Panc1 (cell line): ENCODE measurements at regions of chr7 and their contacts with region 1.

Region 1: DNA sequence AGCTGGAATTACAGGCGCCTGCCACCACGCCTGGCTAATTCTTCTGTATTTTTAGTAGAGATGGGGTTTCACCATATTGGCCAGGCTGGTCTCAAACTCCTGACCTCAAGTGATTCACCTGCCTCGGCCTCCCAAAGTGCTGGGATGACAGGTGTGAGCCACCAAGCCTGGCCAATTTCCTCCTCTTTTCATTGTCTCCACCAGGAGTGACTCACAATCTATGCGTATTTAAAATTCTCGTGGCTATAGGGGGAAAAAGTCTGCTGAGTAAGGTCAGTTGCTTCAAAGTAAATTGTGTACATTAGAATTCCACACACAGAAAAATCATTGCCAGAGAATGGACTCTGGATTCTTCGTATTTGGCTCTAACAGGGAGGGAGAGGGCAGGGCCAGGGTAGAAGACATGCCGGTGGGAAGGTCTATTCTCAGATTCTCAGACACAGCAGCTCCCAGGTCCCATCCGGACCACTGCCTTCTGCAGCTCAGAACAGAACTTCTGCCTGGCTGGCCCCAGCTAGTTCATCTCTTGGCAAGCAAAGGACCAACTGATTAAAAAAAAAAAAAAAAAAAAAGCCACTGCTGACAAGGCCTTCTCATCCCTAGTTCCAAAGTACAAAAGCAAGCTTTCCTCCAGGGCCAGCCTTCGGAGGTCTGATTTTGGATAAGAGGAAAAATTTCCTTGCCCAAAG is 22.2 kb downstream of the PSPH start:
- DNase-seq: no peak
- ATAC-seq: no peak
- H3K4me3 ChIP-seq: no peak overlapping the region
- H3K27ac ChIP-seq: no peak overlapping the region
- H3K4me1 ChIP-seq: peaks cover 5% of the 10 kb centered on the region; the same call in 1 of the 2 replicates
- H3K27me3 ChIP-seq: no peaks in the 10 kb centered on the region
- CTCF ChIP-seq: no peak

Region 2: DNA sequence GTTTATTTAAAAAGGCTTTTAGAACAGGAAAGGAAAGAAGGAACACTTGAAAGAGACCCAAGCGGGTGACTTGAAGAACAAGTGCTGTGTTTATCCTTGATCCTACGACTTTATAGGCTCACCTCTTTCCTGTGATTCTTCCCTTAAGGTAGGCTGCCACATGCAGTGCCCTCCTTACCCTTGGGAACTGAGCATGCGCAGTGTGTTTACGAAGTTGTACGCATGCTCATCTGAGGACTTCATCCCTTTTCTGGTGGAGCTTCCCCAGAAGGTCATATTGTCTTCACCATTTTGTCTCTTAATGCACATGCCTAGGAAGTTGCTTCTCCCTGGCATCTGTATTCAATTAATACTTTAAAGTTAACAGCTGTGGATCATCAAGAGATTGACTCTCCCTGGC is 406.8 kb before region 1 on chr7:
- CTCF ChIA-PET with region 1: no interaction called
- POLR2A ChIA-PET with region 1: no interaction called
- in situ Hi-C with region 1: no loop called
- intact Hi-C with region 1: no loop called
- DNase-seq: no peak
- ATAC-seq: no peak
- H3K4me3 ChIP-seq: no peak overlapping the region
- H3K27ac ChIP-seq: no peak overlapping the region
- H3K4me1 ChIP-seq: no peaks in the 10 kb centered on the region
- H3K27me3 ChIP-seq: peaks cover 4% of the 10 kb centered on the region
- CTCF ChIP-seq: no peak

Region 3: GRCh38 chr7:56009695-56010094 is 19.4 kb before region 1 on chr7:
- CTCF ChIA-PET with region 1: interaction called, 5 read pairs
- POLR2A ChIA-PET with region 1: interaction called, 12 read pairs
- in situ Hi-C with region 1: no loop called
- intact Hi-C with region 1: no loop called
- DNase-seq: no peak
- ATAC-seq: peak; percentile 78
- H3K4me3 ChIP-seq: no peak overlapping the region
- H3K27ac ChIP-seq: peak overlapping the region; percentile 82
- H3K4me1 ChIP-seq: peaks cover 40% of the 10 kb centered on the region
- H3K27me3 ChIP-seq: no peaks in the 10 kb centered on the region
- CTCF ChIP-seq: no peak

Region 4: GRCh38 chr7:56188823-56189346 is 159.8 kb after region 1 on chr7:
- CTCF ChIA-PET with region 1: no interaction called
- POLR2A ChIA-PET with region 1: no interaction called
- in situ Hi-C with region 1: no loop called
- intact Hi-C with region 1: no loop called
- DNase-seq: no peak
- ATAC-seq: no peak
- H3K4me3 ChIP-seq: no peak overlapping the region
- H3K27ac ChIP-seq: no peak overlapping the region
- H3K4me1 ChIP-seq: no peaks in the 10 kb centered on the region
- H3K27me3 ChIP-seq: peaks cover 11% of the 10 kb centered on the region
- CTCF ChIP-seq: no peak